ENCODE measurements at regions of chr2 and their contacts with region 1.

Region 1: GRCh38 chr2:33033606-33034081 is 86.9 kb downstream of the LTBP1 start:
- DNase-seq: no peak
- H3K4me3 ChIP-seq: peak overlapping the region; percentile 21
- H3K27me3 ChIP-seq: 0 out of 2 replicates have a peak, but pooled peaks cover 1% of the 10 kb centered on the region
- CTCF ChIP-seq: peak; percentile 64

Region 2: DNA sequence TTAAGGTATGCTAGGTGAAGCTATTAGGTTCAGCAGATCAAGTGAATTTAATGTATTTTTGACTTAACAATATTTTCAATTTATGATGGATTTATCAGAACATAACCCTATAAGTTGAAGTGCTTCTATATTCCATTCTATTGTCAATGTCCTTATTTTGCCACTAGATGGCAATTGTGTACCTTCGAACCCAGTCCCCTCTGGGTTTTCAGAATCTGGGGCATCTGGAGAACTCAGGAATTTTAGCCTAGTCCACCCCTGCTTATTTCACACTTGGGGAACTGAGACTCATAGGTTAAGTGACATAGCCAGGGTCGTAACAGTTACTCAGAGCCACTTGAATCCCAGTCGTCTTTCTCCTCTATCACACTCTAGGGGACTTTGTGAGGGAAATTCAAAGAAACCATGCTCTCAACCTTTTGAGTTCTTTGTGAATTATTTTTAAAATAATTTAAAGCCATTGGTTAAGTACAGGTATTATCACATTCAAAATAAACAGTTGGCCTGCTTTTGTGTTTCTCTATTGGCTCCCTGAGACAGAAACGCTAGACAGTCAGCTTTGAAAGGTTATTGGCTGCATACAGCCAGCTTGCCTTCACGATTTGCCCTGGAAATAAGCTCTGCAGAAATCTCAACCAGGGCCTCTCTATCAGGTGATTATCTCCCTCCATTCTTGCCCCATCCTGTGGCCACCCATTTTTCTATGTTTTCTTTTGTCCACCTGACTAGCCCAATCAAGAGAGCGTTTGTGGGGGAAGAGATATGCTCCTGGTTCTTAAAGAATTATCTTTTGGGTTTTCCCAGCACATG is 260.8 kb before region 1 on chr2:
- CTCF ChIA-PET with region 1: interaction called, 94 read pairs
- POLR2A ChIA-PET with region 1: no interaction called
- DNase-seq: no peak
- H3K4me3 ChIP-seq: no peak overlapping the region
- H3K27me3 ChIP-seq: no peaks in the 10 kb centered on the region
- CTCF ChIP-seq: peak; percentile 63

Region 3: DNA sequence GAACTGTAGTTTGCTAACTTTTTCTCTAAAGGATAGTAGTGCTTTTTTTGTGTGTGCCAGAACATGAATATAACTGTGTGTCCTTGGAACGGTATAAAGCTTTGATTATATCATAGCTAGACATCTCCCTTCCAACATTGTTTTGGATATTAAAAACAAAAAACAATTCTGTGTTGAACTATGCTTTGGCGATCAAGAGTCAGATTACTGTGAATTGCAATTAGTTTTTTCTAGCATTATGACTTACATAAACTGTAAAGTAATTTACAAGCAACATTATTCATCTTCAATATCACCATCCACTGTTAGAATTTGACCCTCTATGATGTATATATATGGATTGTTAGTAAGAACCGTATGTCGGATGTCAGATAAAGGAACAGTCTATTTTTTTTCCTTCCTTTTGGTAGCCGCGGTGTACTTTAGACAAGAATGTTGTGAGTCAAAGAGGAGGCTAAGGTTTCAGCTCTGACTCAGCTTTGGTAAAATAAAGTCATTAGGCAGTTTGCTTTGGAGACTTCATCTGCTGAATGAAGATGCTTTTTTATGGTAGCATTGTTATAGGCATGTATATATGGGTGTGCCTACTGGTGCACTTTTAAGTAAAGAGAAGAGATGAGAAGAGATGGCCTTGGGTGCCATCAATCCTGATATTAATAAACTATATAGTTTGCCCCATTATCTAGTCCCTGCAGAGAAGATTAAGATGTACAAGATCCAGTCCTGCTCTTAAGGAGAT is 10.5 kb before region 1 on chr2:
- CTCF ChIA-PET with region 1: interaction called, 40 read pairs
- POLR2A ChIA-PET with region 1: interaction called, 5 read pairs
- DNase-seq: peak; percentile 38
- H3K4me3 ChIP-seq: no peak overlapping the region
- H3K27me3 ChIP-seq: no peaks in the 10 kb centered on the region
- CTCF ChIP-seq: no peak

Region 4: DNA sequence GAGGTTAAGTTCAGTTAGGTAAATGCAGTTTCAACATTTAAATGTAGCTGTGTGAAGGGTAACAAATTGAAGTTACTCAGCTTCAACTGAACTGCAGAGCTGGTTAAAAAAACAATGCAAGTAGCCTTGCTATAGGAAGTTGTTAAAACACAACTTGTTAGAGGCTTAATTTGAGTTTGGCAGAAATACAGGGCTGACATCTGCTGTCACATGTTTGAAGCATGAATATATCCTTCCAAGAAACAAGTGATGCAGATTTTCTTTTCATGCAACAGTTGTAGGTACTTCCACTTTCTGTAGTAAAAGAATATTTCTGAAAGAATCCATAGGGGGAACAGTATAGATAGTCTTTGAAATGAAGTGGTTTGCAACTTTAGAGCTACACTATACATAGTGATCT is 234.1 kb after region 1 on chr2:
- CTCF ChIA-PET with region 1: interaction called, 18 read pairs
- POLR2A ChIA-PET with region 1: no interaction called
- DNase-seq: no peak
- H3K4me3 ChIP-seq: no peak overlapping the region
- H3K27me3 ChIP-seq: no peaks in the 10 kb centered on the region
- CTCF ChIP-seq: no peak

Region 5: GRCh38 chr2:33275689-33276444 is 242.2 kb after region 1 on chr2:
- CTCF ChIA-PET with region 1: interaction called, 12 read pairs
- POLR2A ChIA-PET with region 1: no interaction called
- DNase-seq: no peak
- H3K4me3 ChIP-seq: no peak overlapping the region
- H3K27me3 ChIP-seq: no peaks in the 10 kb centered on the region
- CTCF ChIP-seq: no peak

Region 6: GRCh38 chr2:33323957-33324356 is 290.3 kb after region 1 on chr2:
- CTCF ChIA-PET with region 1: no interaction called
- POLR2A ChIA-PET with region 1: no interaction called
- DNase-seq: no peak
- H3K4me3 ChIP-seq: no peak overlapping the region
- H3K27me3 ChIP-seq: no peaks in the 10 kb centered on the region
- CTCF ChIP-seq: no peak

Region 7: GRCh38 chr2:33395655-33396249 is 362.1 kb after region 1 on chr2:
- CTCF ChIA-PET with region 1: interaction called, 11 read pairs
- POLR2A ChIA-PET with region 1: no interaction called
- DNase-seq: no peak
- H3K4me3 ChIP-seq: no peak overlapping the region
- H3K27me3 ChIP-seq: no peaks in the 10 kb centered on the region
- CTCF ChIP-seq: peak; percentile 73

Region 8: GRCh38 chr2:33441235-33441810 is 407.7 kb after region 1 on chr2:
- CTCF ChIA-PET with region 1: interaction called, 10 read pairs
- POLR2A ChIA-PET with region 1: no interaction called
- DNase-seq: no peak
- H3K4me3 ChIP-seq: no peak overlapping the region
- H3K27me3 ChIP-seq: no peaks in the 10 kb centered on the region
- CTCF ChIP-seq: peak; percentile 87